HepG2 (cell line): ENCODE measurements at regions of chr10 and their contacts with region 1.

Region 1: DNA sequence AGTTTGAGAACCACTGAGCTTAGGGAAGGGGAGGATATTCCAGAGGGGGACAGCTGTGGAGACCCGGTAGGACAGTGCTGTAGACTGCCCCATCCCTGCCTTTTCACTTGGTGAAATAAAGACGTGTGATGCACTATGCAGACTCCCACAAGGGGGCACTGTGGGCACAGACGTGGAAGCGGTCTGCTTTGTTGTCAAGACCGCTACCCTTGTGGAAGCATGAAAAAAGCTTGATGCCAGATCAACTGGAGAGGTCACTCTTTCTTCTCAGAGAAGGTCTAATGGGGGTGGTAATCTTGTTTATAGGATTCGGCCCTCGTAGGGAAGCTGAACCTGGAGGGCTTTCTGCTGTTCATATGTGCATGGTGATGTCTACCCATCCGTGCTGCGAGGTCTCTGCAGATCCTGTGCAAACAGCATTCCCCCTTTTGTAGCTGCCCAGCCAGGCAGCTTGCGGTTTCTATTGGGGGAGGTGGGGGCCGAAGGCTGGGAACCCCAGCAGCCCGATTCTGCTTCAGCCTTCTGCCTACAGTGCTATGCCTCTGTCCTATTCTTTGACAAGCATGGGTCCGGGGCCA is 13.7 kb downstream of the RPS24 start:
- DNase-seq: peak; percentile 79
- ATAC-seq: peak; percentile 70
- H3K4me3 ChIP-seq: no peak overlapping the region
- H3K27ac ChIP-seq: no peak overlapping the region
- H3K4me1 ChIP-seq: peaks cover 28% of the 10 kb centered on the region
- H3K27me3 ChIP-seq: no peaks in the 10 kb centered on the region
- CTCF ChIP-seq: peak; percentile 96
- EP300 ChIP-seq: no peak
- POLR2A ChIP-seq: no peak
- RAD21 ChIP-seq: peak; percentile 83

Region 2: GRCh38 chr10:77907900-77908717 is 139.3 kb before region 1 on chr10:
- CTCF ChIA-PET with region 1: no interaction called
- POLR2A ChIA-PET with region 1: no interaction called
- in situ Hi-C with region 1: no loop called
- intact Hi-C with region 1: no loop called
- DNase-seq: peak; percentile 65
- ATAC-seq: peak; percentile 82
- H3K4me3 ChIP-seq: no peak overlapping the region
- H3K27ac ChIP-seq: peak overlapping the region; percentile 86
- H3K4me1 ChIP-seq: peaks cover 94% of the 10 kb centered on the region
- H3K27me3 ChIP-seq: no peaks in the 10 kb centered on the region
- CTCF ChIP-seq: peak; percentile 79
- EP300 ChIP-seq: no peak
- POLR2A ChIP-seq: no peak
- RAD21 ChIP-seq: peak; percentile 76

Region 3: GRCh38 chr10:78165617-78166016 is 118.2 kb after region 1 on chr10:
- CTCF ChIA-PET with region 1: interaction called, 9 read pairs
- POLR2A ChIA-PET with region 1: no interaction called
- in situ Hi-C with region 1: loop called (anchors 5 kb)
- intact Hi-C with region 1: loop called (anchors 1 kb)
- DNase-seq: peak; percentile 60
- ATAC-seq: peak; percentile 95
- H3K4me3 ChIP-seq: no peak overlapping the region
- H3K27ac ChIP-seq: no peak overlapping the region
- H3K4me1 ChIP-seq: no peaks in the 10 kb centered on the region
- H3K27me3 ChIP-seq: peaks cover 0 to 7% of the 10 kb centered on the region in 2 experiments; a peak in 1 of 5 replicates
- CTCF ChIP-seq: peak; percentile 77
- EP300 ChIP-seq: no peak
- POLR2A ChIP-seq: no peak
- RAD21 ChIP-seq: peak; percentile 51

Region 4: DNA sequence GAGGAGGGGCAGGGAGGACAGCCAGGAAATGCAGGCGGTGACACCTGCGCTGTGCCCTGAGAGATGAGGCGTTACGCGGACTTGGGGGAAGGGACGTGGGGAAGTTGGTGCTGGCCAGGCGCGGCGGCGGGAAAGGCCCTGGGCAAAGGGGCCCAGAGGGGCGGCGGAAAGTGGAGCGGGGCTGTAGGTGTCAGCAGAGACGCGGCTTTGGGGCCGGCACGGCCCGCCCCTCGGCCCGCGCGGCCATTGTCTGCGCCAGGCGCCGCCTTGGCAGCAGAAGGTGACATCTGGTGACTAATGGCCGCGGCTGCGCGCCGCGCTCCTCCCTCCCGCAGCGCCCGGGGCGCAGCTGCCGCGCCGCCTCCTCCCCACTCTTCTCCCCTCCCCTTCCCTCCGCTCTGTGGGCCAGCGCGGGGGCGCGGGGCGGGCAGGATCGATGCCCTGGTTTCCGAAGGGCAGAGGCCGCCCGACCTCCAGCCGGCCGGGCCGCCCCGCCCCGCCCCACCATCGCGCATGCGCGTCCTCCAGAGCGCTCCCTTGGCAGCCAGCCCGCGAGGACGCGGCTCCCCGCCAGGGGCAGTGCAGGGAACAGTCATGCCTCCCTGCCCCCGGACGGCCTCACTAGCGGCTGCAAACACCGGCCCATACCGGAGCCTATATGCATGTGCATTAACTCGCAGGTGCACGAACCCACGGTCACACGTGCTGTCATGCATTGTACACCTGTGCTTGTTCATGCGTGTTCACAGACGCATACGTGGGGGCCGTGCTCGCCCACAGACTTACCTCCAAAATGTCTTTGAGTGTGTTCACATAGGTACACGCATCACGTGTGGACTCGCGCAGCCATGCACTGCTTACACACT is 255.8 kb after region 1 on chr10:
- CTCF ChIA-PET with region 1: no interaction called
- POLR2A ChIA-PET with region 1: no interaction called
- in situ Hi-C with region 1: no loop called
- intact Hi-C with region 1: loop called (anchors 10 kb)
- DNase-seq: peak; percentile 89
- ATAC-seq: peak; percentile 93
- H3K4me3 ChIP-seq: peak overlapping the region; percentile 60 to 89 (median 61)
- H3K27ac ChIP-seq: peak overlapping the region; percentile 45
- H3K4me1 ChIP-seq: peaks cover 16% of the 10 kb centered on the region
- H3K27me3 ChIP-seq: peaks cover 0 to 2% of the 10 kb centered on the region in 2 experiments; a peak in 2 of 5 replicates
- CTCF ChIP-seq: peak; percentile 86
- EP300 ChIP-seq: no peak
- POLR2A ChIP-seq: peak; percentile 72 to 75
- RAD21 ChIP-seq: peak; percentile 74; the same call in 1 of the 2 replicates

Region 5: GRCh38 chr10:78424719-78425118 is 377.3 kb after region 1 on chr10:
- CTCF ChIA-PET with region 1: no interaction called
- POLR2A ChIA-PET with region 1: no interaction called
- in situ Hi-C with region 1: no loop called
- intact Hi-C with region 1: loop called (anchors 10 kb)
- DNase-seq: peak; percentile 48
- ATAC-seq: peak; percentile 91
- H3K4me3 ChIP-seq: no peak overlapping the region
- H3K27ac ChIP-seq: no peak overlapping the region
- H3K4me1 ChIP-seq: no peaks in the 10 kb centered on the region
- H3K27me3 ChIP-seq: peaks cover 5 to 30% of the 10 kb centered on the region in 2 experiments; a peak in 4 of 5 replicates
- CTCF ChIP-seq: peak; percentile 74
- EP300 ChIP-seq: no peak
- POLR2A ChIP-seq: no peak
- RAD21 ChIP-seq: 0 out of 2 replicates have a peak, but pooled peaks have one; percentile 20

Region 6: DNA sequence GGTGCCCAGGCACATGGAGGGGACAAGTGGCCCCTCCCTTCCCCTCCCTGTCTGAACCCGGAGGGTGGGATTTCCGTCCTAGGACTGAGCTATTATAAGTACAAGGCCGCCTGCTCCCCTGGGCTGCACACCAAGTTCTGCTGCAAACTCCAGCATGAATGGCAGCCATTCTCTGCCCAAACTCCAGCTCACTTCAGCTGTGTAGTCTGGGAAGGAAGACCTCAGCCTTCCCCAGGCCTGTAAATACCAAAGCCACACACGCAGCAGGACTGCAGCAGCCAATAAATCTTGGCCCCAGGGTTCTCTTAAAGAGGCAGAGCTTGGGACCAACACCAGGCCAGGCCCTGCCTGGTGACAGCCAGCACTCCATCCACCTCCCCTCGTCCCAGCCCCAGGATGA is 730.1 kb after region 1 on chr10:
- CTCF ChIA-PET with region 1: no interaction called
- POLR2A ChIA-PET with region 1: no interaction called
- in situ Hi-C with region 1: no loop called
- intact Hi-C with region 1: loop called (anchors 5 kb)
- DNase-seq: no peak
- ATAC-seq: no peak
- H3K4me3 ChIP-seq: no peak overlapping the region
- H3K27ac ChIP-seq: no peak overlapping the region
- H3K4me1 ChIP-seq: peaks cover 36% of the 10 kb centered on the region
- H3K27me3 ChIP-seq: no peaks in the 10 kb centered on the region; a peak in 2 of 5 replicates
- CTCF ChIP-seq: no peak
- EP300 ChIP-seq: no peak
- POLR2A ChIP-seq: no peak
- RAD21 ChIP-seq: no peak